ENCODE measurements at regions of chr7 and their contacts with region 1.

Region 1: DNA sequence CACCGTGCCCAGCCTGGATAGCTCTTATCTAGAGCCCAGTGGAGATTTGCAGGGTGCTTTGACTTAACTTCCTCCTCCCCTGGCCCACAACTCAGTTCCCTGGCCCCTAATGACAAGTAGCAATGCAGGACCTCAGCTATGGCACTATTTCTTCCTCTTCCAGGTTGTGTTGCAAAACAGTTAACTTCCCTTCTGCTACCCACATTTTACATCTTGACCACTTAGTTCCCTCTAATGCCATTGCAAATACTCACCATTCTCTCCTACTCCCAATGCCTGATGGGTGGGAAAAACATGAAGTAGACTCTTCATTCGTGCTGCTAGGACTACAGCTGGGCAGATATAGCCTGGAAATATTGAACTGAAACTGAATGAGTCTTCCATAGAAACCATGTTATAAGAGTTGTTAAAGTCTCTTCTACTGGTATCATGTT is 39.1 kb upstream of the FGL2 start:
- DNase-seq: peak; percentile 90 to 95 (median 93)
- H3K4me3 ChIP-seq: peak overlapping the region in 2 of 3 experiments; percentile 14 to 62
- H3K4me3 Mint-ChIP-seq: peak overlapping the region; percentile 74 to 75
- H3K27ac ChIP-seq: peak overlapping the region; percentile 66 to 77
- H3K27ac Mint-ChIP-seq: peak overlapping the region; percentile 73 to 93 (median 91)
- H3K4me1 ChIP-seq: peaks cover 59 to 85% of the 10 kb centered on the region in 2 donors
- H3K4me1 Mint-ChIP-seq: peaks cover 73% of the 10 kb centered on the region
- H3K27me3 ChIP-seq: no peaks in the 10 kb centered on the region
- H3K27me3 Mint-ChIP-seq: peaks cover 0 to 2% (median 0%) of the 10 kb centered on the region in 3 donors
- CTCF ChIP-seq: no peak

Region 2: GRCh38 chr7:77188731-77189437 is 49.8 kb before region 1 on chr7:
- intact Hi-C with region 1: loop called in 1 of 2 experiments (anchors 2 kb)
- DNase-seq: peak; percentile 50 to 72 (median 53)
- H3K4me3 ChIP-seq: peak overlapping the region in 1 of 3 experiments; percentile 22
- H3K4me3 Mint-ChIP-seq: peak overlapping the region; percentile 2 to 68
- H3K27ac ChIP-seq: peak overlapping the region in 1 of 2 donors; percentile 69
- H3K27ac Mint-ChIP-seq: peak overlapping the region; percentile 49 to 89 (median 84)
- H3K4me1 ChIP-seq: peaks cover 85 to 96% of the 10 kb centered on the region in 2 donors
- H3K4me1 Mint-ChIP-seq: peaks cover 85% of the 10 kb centered on the region
- H3K27me3 ChIP-seq: no peaks in the 10 kb centered on the region
- H3K27me3 Mint-ChIP-seq: no peaks in the 10 kb centered on the region
- CTCF ChIP-seq: no peak

Region 3: DNA sequence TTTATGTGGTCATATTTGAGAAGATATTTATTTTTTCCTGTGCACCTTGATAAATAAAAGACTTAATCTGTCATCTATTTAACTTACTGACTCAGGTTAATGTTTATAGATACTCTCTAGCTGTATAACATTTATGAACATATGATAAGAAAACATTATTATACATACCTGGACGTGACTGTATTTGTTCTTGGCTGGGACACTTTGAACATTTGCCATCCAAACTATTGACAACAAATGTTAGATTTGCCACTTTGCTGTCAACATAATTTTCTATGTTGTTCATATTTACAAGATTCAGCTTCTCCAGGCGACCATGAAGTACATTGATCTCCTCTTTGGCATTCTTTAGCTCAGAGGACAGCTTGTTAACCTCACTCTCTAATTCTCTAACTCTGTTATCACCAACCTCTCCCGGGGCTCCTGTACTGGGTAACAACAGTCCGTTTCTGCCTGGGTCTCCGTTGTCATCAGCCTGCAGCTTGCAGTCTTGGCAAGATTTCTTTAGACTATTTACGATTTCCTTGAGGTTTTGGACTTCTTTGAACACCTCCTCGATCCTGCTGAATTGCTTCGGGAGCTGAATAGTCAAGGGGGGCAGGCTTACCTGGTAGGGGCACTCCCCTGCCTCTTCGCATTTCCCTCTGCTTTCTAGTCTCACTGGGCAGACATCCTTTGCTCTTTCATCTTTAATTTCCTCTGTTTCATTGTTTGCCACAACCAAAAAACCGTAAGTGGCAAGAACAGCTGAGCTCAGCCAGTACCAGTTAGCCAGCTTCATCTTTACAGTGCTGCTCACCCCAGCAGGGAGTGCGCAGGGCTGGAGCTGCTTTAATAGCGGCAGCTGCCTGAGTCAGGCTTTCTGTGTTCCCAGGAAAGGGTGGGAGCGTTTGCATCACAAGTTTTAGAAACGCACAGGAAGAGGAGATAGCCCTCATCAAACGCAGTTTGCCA is 39.4 kb before region 1 on chr7 and contains the start of gene FGL2:
- intact Hi-C with region 1: loop called in 1 of 2 experiments (anchors 5 kb)
- DNase-seq: peak; percentile 25 to 54 (median 53)
- H3K4me3 ChIP-seq: peak within 1 kb of the TSS; percentile 89 to 100 (median 99)
- H3K4me3 Mint-ChIP-seq: peak within 1 kb of the TSS; percentile 96 to 100
- H3K27ac ChIP-seq: peak within 1 kb of the TSS; percentile 78 to 88
- H3K27ac Mint-ChIP-seq: peak within 1 kb of the TSS; percentile 90 to 95 (median 93)
- H3K4me1 ChIP-seq: peaks cover 13 to 33% of the 10 kb centered on the region in 2 donors
- H3K4me1 Mint-ChIP-seq: peaks cover 45% of the 10 kb centered on the region
- H3K27me3 ChIP-seq: no peaks in the 10 kb centered on the region
- H3K27me3 Mint-ChIP-seq: peaks cover 0 to 2% (median 1%) of the 10 kb centered on the region in 3 donors
- CTCF ChIP-seq: no peak
- polyA plus RNA-seq, gene FGL2: 238 to 775 (median 774) TPM